ENCODE measurements at regions of chr17 and their contacts with region 1.

Region 1: DNA sequence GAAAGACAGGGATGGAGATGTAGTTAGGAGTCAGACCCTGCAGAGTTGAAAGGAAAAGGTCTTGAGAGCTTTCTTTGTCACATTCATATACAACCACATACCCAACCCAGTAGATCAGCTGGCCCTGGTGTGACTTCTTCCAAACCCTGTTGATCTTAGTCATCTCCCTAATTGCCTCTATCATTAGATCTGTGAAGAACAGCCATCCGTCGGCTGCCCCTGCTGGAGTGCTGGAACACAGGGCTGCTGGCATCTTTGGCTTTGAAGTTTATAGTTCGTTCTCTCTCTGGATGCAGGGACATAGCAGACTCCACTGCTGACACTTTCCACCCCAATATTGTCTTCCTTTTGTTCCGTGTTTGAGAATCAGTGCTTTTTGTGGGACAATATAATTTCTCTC is 10.4 kb upstream of the SMG8 start:
- DNase-seq: no peak
- H3K4me3 ChIP-seq: no peak overlapping the region
- H3K27ac ChIP-seq: no peak overlapping the region
- H3K4me1 ChIP-seq: no peaks in the 10 kb centered on the region
- H3K27me3 ChIP-seq: no peaks in the 10 kb centered on the region
- CTCF ChIP-seq: no peak

Region 2: GRCh38 chr17:59041146-59041545 is 158.3 kb before region 1 on chr17:
- CTCF ChIA-PET with region 1: interaction called, 11 read pairs
- POLR2A ChIA-PET with region 1: no interaction called
- intact Hi-C with region 1: no loop called
- DNase-seq: no peak
- H3K4me3 ChIP-seq: no peak overlapping the region
- H3K27ac ChIP-seq: no peak overlapping the region
- H3K4me1 ChIP-seq: no peaks in the 10 kb centered on the region
- H3K27me3 ChIP-seq: no peaks in the 10 kb centered on the region
- CTCF ChIP-seq: no peak

Measured in PC-9 (cell line).